ENCODE measurements at regions of chr5 and their contacts with region 1.

Region 1: GRCh38 chr5:137743031-137743640 is 7.2 kb upstream of the KLHL3 start:
- DNase-seq: peak; percentile 53
- CTCF ChIP-seq: peak; percentile 65

Region 2: DNA sequence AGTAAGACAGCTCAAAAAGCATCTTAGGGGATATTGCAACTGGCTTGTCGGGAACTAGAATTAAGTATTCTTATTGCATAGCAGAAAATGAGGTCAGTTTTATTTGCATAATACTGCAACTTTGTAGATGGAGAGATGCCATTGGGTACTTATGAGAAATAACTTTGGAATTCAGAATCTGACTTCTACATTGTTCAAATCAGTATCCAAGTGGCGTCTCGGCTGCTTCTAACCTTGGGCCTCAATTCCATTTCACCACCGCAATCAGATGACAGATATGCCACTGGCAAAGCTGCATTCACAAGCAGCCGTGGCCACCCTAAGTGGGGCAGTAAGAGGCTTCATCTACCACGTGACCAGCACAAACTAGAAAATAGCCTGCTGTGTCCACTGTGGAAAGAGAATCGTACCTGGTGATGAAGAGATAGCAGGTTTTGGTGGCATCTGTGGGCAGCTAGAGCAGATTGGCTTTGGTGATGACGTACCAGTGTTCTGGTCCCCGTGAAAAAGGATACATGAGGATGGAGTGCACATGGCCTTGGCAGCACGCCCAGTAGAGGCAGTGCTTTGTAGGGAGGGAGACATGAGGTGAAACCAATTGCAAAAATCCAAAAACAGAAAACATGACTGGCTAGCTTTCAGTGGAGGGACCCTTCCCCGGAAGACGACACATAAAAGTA is 123.8 kb before region 1 on chr5:
- CTCF ChIA-PET with region 1: interaction called, 10 read pairs
- POLR2A ChIA-PET with region 1: no interaction called
- DNase-seq: no peak
- CTCF ChIP-seq: no peak

Region 3: DNA sequence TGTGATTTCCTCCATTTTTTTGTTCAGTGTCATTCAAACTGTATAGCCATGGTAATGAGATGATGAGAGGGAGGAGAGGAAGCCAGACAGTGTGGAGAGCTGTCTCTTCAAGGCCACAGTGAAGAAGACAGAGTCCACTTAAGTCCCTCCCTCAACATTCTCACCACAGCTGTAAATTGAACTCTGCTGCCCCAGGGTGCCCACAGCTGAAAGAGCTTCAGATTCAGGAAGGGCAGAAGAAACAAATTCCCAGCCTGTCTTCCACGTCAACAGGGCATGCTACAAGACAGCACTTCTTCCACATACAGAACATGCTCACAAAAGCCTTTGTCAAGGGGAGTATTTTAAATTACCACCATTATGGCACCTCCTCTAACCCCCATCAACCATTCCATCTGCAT is 107.6 kb before region 1 on chr5:
- CTCF ChIA-PET with region 1: interaction called, 148 read pairs
- POLR2A ChIA-PET with region 1: no interaction called
- DNase-seq: no peak
- CTCF ChIP-seq: no peak

Region 4: DNA sequence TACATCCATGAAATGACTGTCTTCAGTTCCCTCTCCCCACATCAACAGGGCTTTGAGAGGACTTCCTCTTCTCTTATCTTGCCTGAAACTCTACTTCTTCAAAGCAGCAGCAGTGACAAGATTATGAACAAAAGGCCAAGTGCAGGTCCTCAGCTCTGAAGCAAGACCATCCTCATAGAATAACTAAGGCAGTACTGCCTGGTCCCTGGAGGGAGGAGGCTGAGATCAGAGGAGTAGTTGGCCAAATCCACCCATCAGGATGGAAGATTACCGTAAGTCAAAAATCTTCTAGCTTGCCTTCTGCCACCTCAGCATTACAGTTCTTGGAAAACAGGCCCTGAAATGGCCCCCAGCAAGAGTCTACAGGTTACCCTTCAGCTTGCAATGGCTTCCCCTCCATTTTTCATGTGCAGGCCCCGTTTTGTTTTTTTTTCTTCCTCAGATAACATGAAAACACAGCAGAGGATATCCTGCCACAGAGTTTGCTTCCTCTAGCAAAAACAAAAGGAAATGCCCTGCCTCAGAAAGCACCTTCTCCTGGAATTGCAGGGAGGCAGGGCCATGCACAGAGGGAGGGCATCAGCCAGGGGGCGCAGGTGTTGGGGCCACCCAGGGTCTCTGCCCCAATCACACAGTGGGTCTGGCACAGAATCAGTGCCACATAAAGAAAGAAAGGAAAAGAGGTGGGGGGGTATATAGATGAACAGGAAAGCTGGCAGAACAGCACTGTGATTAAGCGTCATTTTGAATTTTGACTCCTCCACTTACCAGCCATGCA is 47.3 kb before region 1 on chr5:
- CTCF ChIA-PET with region 1: interaction called, 17 read pairs
- POLR2A ChIA-PET with region 1: no interaction called
- DNase-seq: peak; percentile 35
- CTCF ChIP-seq: peak; percentile 6

Region 5: GRCh38 chr5:137754126-137754960 is 11.2 kb after region 1 on chr5 and contains the start of gene HNRNPA0:
- CTCF ChIA-PET with region 1: interaction called, 55 read pairs
- POLR2A ChIA-PET with region 1: interaction called, 6 read pairs
- DNase-seq: peak; percentile 96
- CTCF ChIP-seq: no peak

Region 6: GRCh38 chr5:137815202-137815985 is 72.3 kb after region 1 on chr5:
- CTCF ChIA-PET with region 1: no interaction called
- POLR2A ChIA-PET with region 1: no interaction called
- DNase-seq: no peak
- CTCF ChIP-seq: no peak